Dendritic cell treated with granulocyte-macrophage colony-stimulating factor and Interleukin-4, amounts not matched to agents 40 ng/mL and 50 ng/mL, for 4 days (primary cell): ENCODE measurements at regions of chr11 and their contacts with region 1.

Region 1: DNA sequence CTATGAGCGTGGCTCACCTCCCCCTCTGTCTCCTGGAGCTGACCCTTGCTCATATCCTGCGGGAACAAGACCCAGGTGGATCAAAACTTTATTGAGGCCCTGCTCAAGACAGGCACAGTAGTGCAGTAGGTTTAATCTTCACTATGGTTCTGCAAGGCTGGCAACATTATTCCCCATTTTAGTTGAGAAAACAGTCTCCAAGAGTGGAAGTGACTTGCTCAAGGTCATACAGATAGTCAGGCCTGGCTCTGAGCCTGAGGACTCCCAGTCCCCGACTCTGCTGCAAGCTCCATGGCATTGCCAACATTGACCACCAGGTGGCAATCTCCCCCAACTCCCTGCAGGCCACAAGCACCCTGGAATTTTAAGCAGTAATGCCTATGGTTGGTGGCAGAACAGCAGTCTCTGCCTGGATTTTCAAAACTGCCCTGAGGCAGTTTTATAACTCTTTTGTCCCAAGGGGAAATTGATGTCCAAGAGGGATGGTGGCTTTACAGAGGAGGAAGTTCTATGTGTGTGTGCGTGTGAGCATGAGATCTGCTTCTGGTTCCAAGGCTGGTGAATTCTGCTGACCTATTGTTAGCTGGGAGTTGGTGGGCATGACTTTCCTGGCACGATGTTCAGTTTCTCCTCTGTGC is 34.1 kb downstream of the NEU3 start:
- H3K4me3 Mint-ChIP-seq: no peak overlapping the region
- H3K27ac Mint-ChIP-seq: no peak overlapping the region
- H3K4me1 Mint-ChIP-seq: no peaks in the 10 kb centered on the region
- H3K27me3 Mint-ChIP-seq: no peaks in the 10 kb centered on the region

Region 2: GRCh38 chr11:74559110-74559933 is 463.6 kb before region 1 on chr11:
- intact Hi-C with region 1: no loop called
- H3K4me3 Mint-ChIP-seq: no peak overlapping the region
- H3K27ac Mint-ChIP-seq: no peak overlapping the region
- H3K4me1 Mint-ChIP-seq: no peaks in the 10 kb centered on the region
- H3K27me3 Mint-ChIP-seq: peaks cover 4% of the 10 kb centered on the region

Region 3: DNA sequence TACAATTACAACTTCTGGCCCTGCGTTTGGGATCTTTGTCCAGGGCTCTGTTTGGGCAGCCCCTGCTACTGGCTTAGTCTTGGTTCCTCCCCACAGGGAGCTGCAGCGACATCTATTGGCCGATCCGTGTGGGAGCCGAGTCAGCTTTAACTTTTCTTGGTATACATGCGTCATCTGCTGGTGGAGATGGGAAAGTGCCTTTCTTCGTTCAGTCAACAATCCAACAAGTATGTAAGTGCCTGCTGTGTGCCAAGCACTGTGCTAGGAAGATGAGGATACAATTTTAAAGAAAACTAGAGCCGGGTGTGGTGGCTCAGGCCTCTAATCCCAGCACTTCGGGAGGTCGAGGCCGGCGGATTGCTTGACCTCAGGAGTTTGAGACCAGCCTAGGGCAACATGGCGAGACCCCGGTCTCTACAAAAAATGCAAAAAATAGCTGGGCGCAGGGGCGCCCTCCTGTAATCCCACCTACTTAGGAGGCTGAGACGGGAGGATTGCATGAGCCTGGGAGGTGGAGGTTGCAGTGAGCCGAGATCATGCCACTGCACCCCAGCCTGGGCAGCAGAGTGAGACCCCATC is 225.9 kb after region 1 on chr11:
- intact Hi-C with region 1: loop called (anchors 1 kb)
- H3K4me3 Mint-ChIP-seq: no peak overlapping the region
- H3K27ac Mint-ChIP-seq: no peak overlapping the region
- H3K4me1 Mint-ChIP-seq: no peaks in the 10 kb centered on the region
- H3K27me3 Mint-ChIP-seq: peaks cover 56% of the 10 kb centered on the region